Tibial artery (tissue), 4 donors: ENCODE measurements at regions of chr2 and their contacts with region 1.

Region 1: DNA sequence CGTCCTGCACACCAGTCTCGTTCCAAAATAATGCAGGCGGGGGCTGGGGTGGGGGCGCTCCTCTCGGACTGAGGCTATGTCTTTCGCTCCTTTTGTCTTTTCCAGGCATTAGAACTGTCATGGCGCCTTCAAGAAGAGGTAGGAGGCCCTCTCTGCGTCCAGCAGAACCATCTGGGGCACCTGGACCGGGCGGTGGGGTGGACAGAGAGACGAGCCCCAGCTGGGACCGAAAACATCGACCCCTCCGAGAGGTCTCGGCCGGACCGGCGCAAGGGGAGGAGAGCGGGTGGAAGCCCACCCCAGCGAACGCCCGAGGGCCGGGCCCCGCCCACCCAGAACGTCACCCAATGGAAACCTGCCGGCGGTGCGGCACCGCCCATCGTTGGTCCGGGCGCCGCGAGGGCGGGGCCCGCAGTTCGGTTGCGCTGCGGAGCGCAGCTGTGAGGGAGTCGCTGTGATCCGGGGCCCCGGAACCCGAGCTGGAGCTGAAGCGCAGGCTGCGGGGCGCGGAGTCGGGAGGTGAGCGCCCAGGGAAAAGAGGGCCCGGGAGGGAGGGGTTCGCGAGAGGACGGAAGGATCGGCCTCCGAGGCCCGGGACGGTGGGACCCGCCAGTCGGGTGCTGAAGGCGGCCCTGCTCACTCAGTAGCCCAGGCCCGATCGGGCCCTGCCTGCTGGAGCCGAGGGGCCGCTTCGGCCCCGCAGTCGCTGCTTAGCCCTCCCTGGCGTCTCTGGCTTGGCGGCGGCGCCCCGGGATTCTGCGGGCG is at the start of gene NRBP1:
- DNase-seq: peak; percentile 88 to 96
- H3K4me3 ChIP-seq: peak within 1 kb of the TSS; percentile 71 to 85
- H3K27ac ChIP-seq: peak within 1 kb of the TSS; percentile 92 to 95
- H3K4me1 ChIP-seq: peaks cover 4 to 41% (median 26%) of the 10 kb centered on the region in 4 donors
- H3K27me3 ChIP-seq: no peaks in the 10 kb centered on the region
- CTCF ChIP-seq: no peak

Region 2: GRCh38 chr2:27380626-27381545 is 47.5 kb before region 1 on chr2 and contains the start of gene ZNF513:
- intact Hi-C with region 1: loop called (anchors 5 kb)
- DNase-seq: peak; percentile 96 to 98
- H3K4me3 ChIP-seq: peak within 1 kb of the TSS; percentile 67 to 68
- H3K27ac ChIP-seq: peak within 1 kb of the TSS; percentile 83 to 89
- H3K4me1 ChIP-seq: peaks cover 0 to 28% (median 18%) of the 10 kb centered on the region in 4 donors
- H3K27me3 ChIP-seq: no peaks in the 10 kb centered on the region
- CTCF ChIP-seq: no peak

Region 3: DNA sequence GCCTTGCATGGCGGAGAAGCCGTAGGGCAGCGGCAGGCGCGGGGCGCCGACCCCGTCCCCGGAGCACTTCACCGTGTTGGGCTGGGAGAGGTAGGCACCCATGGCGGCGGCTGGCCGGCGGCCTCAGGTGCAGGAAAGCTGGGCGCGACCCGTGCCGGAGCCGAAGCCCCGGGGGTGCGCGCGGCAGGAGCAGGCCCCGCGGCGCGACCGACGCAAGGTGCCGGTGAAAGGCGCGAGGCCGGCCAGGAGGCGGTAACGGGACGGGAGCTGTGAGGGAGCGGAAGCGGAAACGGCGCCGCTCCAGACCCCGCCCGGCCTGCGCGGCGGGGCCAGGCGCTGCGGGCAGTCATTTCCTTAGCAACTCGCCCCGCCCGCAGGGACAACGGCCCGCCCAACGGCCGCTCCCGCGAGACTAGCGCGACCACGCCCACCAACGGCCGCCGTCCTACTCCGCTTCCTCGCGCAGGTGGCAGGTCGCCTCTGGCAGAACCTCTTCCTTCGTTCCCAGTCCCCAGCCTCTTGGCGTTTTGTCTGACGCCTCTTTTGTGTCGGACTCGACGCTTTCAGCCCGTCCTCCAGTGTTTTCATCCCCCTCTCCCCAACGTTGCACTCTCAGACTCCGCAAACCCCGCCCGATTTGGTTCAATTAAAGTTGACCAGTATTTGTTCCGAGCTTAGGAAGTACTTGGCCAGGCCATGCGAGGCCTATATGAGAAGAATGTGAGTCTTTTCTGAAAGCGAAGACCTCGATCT is 18.9 kb before region 1 on chr2 and contains the start of gene PPM1G:
- intact Hi-C with region 1: loop called (anchors 2 kb)
- DNase-seq: peak; percentile 89 to 96
- H3K4me3 ChIP-seq: peak within 1 kb of the TSS; percentile 70 to 85
- H3K27ac ChIP-seq: peak within 1 kb of the TSS; percentile 76 to 80
- H3K4me1 ChIP-seq: peaks cover 0 to 22% (median 10%) of the 10 kb centered on the region in 4 donors
- H3K27me3 ChIP-seq: no peaks in the 10 kb centered on the region
- CTCF ChIP-seq: no peak

Region 4: GRCh38 chr2:27489498-27490397 is 61.4 kb after region 1 on chr2 and contains the start of gene IFT172:
- intact Hi-C with region 1: no loop called
- DNase-seq: peak; percentile 99
- H3K4me3 ChIP-seq: peak within 1 kb of the TSS; percentile 60 to 64
- H3K27ac ChIP-seq: peak within 1 kb of the TSS; percentile 64 to 76
- H3K4me1 ChIP-seq: peaks cover 0 to 23% (median 15%) of the 10 kb centered on the region in 4 donors
- H3K27me3 ChIP-seq: no peaks in the 10 kb centered on the region
- CTCF ChIP-seq: no peak